MCF 10A (cell line): ENCODE measurements at regions of chr11 and their contacts with region 1.

Region 1: DNA sequence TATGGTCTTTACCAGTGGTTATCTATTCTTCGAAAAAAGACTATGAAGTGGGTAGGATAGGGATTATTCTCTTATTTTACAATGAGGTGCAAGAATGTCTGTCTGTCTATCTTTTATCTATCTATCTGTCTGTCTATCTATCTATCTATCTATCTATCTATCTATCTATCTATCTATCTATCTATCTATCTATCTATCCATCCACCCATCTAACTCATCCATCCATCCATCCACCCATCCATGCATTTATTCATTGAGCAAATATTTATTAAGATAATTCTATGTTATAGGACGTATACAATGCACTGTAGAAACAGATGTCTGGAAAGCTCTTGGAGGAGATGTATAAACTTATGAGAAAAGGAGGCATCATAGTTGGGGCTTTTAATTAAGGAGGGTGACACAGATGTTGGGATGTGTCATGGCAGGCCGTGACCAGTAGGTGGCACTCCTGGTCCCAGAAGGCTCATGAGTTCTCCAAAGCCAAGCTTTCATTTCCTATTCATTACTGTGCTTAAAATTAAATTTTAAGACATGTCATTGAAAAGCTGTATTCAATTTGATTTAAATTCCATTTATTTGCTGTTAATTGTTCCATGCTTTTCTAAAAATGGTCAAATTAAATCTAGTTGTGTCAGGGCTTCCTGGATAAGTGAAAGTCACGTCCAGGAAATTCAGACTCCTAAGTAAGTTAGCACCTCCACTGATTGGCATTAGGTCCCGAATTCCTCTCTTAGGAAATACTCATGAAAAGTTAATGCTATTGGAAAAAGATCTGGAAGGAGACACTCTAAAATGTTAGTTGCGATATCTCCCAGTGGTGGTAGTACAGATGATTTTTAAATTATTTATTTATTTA is 19.0 kb upstream of the E2F8 start:
- DNase-seq: peak; percentile 65
- H3K4me3 Mint-ChIP-seq: peak overlapping the region; percentile 39
- H3K27ac Mint-ChIP-seq: no peak overlapping the region
- H3K4me1 Mint-ChIP-seq: no peaks in the 10 kb centered on the region
- H3K27me3 Mint-ChIP-seq: no peaks in the 10 kb centered on the region
- CTCF ChIP-seq: peak; percentile 94

Region 2: GRCh38 chr11:19240420-19241259 is 19.1 kb before region 1 on chr11 and contains the start of gene E2F8:
- CTCF ChIA-PET with region 1: interaction called, 11 read pairs
- POLR2A ChIA-PET with region 1: no interaction called
- intact Hi-C with region 1: no loop called
- DNase-seq: peak; percentile 95
- H3K4me3 Mint-ChIP-seq: peak within 1 kb of the TSS; percentile 85
- H3K27ac Mint-ChIP-seq: peak within 1 kb of the TSS; percentile 42
- H3K4me1 Mint-ChIP-seq: peaks cover 18% of the 10 kb centered on the region
- H3K27me3 Mint-ChIP-seq: no peaks in the 10 kb centered on the region
- CTCF ChIP-seq: no peak
- total RNA-seq, gene E2F8: 0.88 and 1.2 TPM in 2 replicates

Region 3: DNA sequence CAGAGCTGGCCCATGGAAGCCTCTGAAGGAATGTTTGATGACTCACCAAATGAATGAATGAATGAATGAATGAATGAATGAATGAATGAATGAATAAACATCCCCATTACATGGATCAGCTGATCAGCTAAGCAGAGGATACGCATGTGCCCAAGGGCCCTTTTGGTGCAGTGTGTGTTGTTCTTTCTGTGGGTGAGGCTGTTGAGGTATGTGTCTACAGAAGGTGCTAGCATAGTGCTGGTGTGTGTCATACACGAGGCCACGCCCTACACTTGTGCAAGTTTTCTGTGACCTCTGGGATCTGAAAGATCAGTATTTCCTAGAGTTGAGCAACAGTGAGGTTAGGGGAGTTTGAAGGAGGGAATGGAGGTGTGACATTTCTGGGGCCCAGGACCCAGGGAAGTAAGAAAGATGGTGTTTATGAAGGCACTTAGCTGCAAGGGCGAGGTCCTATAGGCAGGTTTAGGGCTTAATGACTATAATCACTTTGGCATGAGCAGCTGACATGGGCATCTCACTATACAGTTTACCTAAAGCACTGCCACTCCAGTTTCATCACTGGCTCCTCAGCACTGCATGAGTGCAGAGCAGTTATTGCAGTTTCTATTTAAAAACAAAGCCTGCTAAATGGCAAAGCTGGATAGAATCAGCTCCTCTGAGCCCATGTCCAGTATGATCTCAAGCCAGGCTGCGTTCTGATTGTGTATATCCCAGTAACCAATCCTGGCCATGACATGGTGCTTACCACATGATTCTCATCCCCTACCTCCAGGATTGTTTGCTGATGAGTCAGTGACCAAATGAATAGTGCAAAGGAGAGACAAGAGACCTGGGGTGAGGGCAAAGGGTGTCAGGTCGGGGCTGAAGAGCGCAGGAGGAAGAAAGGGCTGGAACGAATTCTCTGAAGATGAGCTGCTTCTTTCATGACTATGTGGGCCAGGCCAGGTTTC is 17.4 kb after region 1 on chr11:
- CTCF ChIA-PET with region 1: interaction called, 39 read pairs
- POLR2A ChIA-PET with region 1: no interaction called
- intact Hi-C with region 1: no loop called
- DNase-seq: peak; percentile 95
- H3K4me3 Mint-ChIP-seq: no peak overlapping the region
- H3K27ac Mint-ChIP-seq: peak overlapping the region; percentile 74
- H3K4me1 Mint-ChIP-seq: peaks cover 27% of the 10 kb centered on the region
- H3K27me3 Mint-ChIP-seq: no peaks in the 10 kb centered on the region
- CTCF ChIP-seq: no peak

Region 4: GRCh38 chr11:19311308-19312030 is 51.8 kb after region 1 on chr11:
- CTCF ChIA-PET with region 1: interaction called, 4 read pairs
- POLR2A ChIA-PET with region 1: interaction called, 3 read pairs
- intact Hi-C with region 1: loop called (anchors 1 kb)
- DNase-seq: peak; percentile 71
- H3K4me3 Mint-ChIP-seq: no peak overlapping the region
- H3K27ac Mint-ChIP-seq: no peak overlapping the region
- H3K4me1 Mint-ChIP-seq: peaks cover 5% of the 10 kb centered on the region
- H3K27me3 Mint-ChIP-seq: no peaks in the 10 kb centered on the region
- CTCF ChIP-seq: peak; percentile 59

Region 5: DNA sequence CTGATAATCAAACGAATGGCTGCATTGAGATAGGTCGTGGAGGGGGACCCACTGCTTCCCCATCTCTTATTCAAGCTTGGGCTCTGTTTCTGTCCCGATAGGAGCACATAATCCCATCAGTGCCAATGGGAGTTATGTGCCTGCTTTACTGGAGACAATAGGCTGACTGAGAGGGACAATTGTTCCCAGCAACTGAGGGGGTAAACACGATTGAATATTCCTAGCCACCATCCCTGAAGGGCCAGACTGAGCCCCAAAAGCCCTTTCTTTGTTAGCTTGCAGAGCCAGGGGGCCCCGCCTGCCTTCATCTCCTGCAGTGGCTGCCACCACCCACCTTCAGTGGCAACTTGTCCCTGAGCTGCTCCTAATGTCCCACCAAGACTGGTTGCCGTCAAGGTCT is 280.1 kb after region 1 on chr11:
- CTCF ChIA-PET with region 1: interaction called, 10 read pairs
- POLR2A ChIA-PET with region 1: no interaction called
- intact Hi-C with region 1: no loop called
- DNase-seq: no peak
- H3K4me3 Mint-ChIP-seq: no peak overlapping the region
- H3K27ac Mint-ChIP-seq: no peak overlapping the region
- H3K4me1 Mint-ChIP-seq: no peaks in the 10 kb centered on the region
- H3K27me3 Mint-ChIP-seq: peaks cover 91% of the 10 kb centered on the region
- CTCF ChIP-seq: no peak